Activated CD8-positive, alpha-beta T cell treated with anti-CD3 and anti-CD28 coated beads for 36 hours (primary cell): ENCODE measurements at regions of chr3 and their contacts with region 1.

Region 1: DNA sequence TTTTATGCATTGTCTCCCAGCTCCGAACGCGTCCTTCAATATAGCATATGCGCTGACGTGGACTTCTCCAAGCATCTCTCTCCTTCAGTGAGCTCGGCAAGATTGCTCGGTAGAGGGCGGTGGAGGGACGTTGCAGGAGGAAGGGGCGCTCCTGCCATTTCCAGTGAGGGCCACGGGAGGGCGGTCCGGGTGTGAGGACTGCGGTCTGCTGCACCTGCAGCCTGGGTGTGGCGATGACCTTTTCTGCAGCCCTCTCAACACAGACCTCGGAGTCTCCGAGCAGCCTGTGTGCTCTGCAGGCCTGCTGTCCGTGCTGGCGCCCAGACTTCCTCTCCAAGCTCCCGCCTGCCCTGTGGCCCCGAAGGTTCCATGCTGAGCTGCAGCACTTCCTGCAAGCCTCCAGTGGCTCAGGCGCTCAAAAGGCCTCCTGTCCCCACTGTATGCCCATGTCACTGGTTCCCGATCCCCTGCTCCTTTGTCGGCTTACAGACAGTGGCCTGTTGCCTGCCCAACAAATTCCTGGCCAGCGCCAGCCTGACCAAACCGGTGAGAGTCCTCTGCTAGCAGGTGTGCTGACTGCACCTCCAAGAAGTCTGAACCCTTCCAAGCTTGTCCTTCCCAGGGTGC is 8.9 kb upstream of the RTP3 start:
- DNase-seq: peak; percentile 97
- ATAC-seq: peak; percentile 99
- H3K4me3 Mint-ChIP-seq: peak overlapping the region; percentile 26
- H3K27ac Mint-ChIP-seq: no peak overlapping the region
- H3K4me1 Mint-ChIP-seq: peaks cover 8% of the 10 kb centered on the region
- H3K27me3 Mint-ChIP-seq: no peaks in the 10 kb centered on the region
- CTCF ChIP-seq: peak; percentile 100

Region 2: GRCh38 chr3:46449755-46450552 is 38.9 kb before region 1 on chr3:
- CTCF ChIA-PET with region 1: interaction called, 18 read pairs
- POLR2A ChIA-PET with region 1: no interaction called
- intact Hi-C with region 1: no loop called
- DNase-seq: peak; percentile 9
- ATAC-seq: no peak
- H3K4me3 Mint-ChIP-seq: no peak overlapping the region
- H3K27ac Mint-ChIP-seq: no peak overlapping the region
- H3K4me1 Mint-ChIP-seq: no peaks in the 10 kb centered on the region
- H3K27me3 Mint-ChIP-seq: peaks cover 2% of the 10 kb centered on the region
- CTCF ChIP-seq: peak; percentile 71

Region 3: DNA sequence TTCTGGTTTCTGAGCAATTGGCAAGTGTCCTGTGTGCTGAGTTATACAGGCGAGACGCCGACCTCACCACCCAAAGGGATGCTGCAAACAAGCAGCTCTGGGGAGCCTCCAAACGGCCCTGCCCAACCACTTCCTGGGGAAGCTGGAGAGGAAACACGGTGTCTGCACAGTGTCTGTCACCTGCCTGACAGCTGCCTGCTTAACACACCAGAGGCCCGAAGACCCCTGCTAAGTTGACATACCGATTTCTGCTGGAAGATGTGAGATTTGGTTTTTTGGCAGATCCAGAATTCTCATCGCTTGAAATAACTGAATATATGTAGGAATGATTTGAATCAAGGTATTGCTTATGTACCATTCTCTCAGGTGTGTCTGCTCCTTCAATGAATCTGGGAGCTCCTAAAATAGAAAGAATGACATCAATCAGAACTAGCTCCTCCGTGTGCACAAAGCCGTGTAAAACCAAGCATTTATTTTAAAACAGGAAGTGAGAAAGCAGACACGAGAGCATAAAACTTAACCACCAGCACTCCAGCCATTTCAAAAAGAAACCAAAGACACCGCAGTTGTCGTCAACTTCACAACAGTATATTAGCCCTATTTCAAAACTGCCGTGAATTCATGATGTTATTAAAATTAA is 50.1 kb after region 1 on chr3:
- CTCF ChIA-PET with region 1: interaction called, 39 read pairs
- POLR2A ChIA-PET with region 1: interaction called, 3 read pairs
- intact Hi-C with region 1: no loop called
- DNase-seq: peak; percentile 89
- ATAC-seq: peak; percentile 93
- H3K4me3 Mint-ChIP-seq: peak overlapping the region; percentile 66
- H3K27ac Mint-ChIP-seq: peak overlapping the region; percentile 81
- H3K4me1 Mint-ChIP-seq: peaks cover 46% of the 10 kb centered on the region
- H3K27me3 Mint-ChIP-seq: peaks cover 2% of the 10 kb centered on the region
- CTCF ChIP-seq: no peak

Region 4: GRCh38 chr3:46566036-46566641 is 77.3 kb after region 1 on chr3 and contains the start of gene LRRC2:
- CTCF ChIA-PET with region 1: interaction called, 150 read pairs
- POLR2A ChIA-PET with region 1: interaction called, 3 read pairs
- intact Hi-C with region 1: no loop called
- DNase-seq: peak; percentile 42
- ATAC-seq: peak; percentile 75
- H3K4me3 Mint-ChIP-seq: peak within 1 kb of the TSS; percentile 60
- H3K27ac Mint-ChIP-seq: no peak within 1 kb of the TSS
- H3K4me1 Mint-ChIP-seq: peaks cover 7% of the 10 kb centered on the region
- H3K27me3 Mint-ChIP-seq: peaks cover 21% of the 10 kb centered on the region
- CTCF ChIP-seq: no peak
- total RNA-seq, gene LRRC2: not detected

Region 5: GRCh38 chr3:46604127-46604526 is 115.3 kb after region 1 on chr3:
- CTCF ChIA-PET with region 1: interaction called, 16 read pairs
- POLR2A ChIA-PET with region 1: interaction called, 4 read pairs
- intact Hi-C with region 1: no loop called
- DNase-seq: no peak
- ATAC-seq: no peak
- H3K4me3 Mint-ChIP-seq: no peak overlapping the region
- H3K27ac Mint-ChIP-seq: no peak overlapping the region
- H3K4me1 Mint-ChIP-seq: no peaks in the 10 kb centered on the region
- H3K27me3 Mint-ChIP-seq: no peaks in the 10 kb centered on the region
- CTCF ChIP-seq: no peak

Region 6: GRCh38 chr3:46629551-46630517 is 141.0 kb after region 1 on chr3:
- CTCF ChIA-PET with region 1: interaction called, 254 read pairs
- POLR2A ChIA-PET with region 1: interaction called, 5 read pairs
- intact Hi-C with region 1: loop called (anchors 2 kb)
- DNase-seq: peak; percentile 85
- ATAC-seq: peak; percentile 100
- H3K4me3 Mint-ChIP-seq: peak overlapping the region; percentile 48
- H3K27ac Mint-ChIP-seq: no peak overlapping the region
- H3K4me1 Mint-ChIP-seq: peaks cover 13% of the 10 kb centered on the region
- H3K27me3 Mint-ChIP-seq: no peaks in the 10 kb centered on the region
- CTCF ChIP-seq: peak; percentile 99

Region 7: GRCh38 chr3:46759239-46760167 is 270.7 kb after region 1 on chr3:
- CTCF ChIA-PET with region 1: no interaction called
- POLR2A ChIA-PET with region 1: no interaction called
- intact Hi-C with region 1: no loop called
- DNase-seq: no peak
- ATAC-seq: no peak
- H3K4me3 Mint-ChIP-seq: no peak overlapping the region
- H3K27ac Mint-ChIP-seq: no peak overlapping the region
- H3K4me1 Mint-ChIP-seq: no peaks in the 10 kb centered on the region
- H3K27me3 Mint-ChIP-seq: no peaks in the 10 kb centered on the region
- CTCF ChIP-seq: no peak